ENCODE measurements at regions of chr2 and their contacts with region 1.

Region 1: DNA sequence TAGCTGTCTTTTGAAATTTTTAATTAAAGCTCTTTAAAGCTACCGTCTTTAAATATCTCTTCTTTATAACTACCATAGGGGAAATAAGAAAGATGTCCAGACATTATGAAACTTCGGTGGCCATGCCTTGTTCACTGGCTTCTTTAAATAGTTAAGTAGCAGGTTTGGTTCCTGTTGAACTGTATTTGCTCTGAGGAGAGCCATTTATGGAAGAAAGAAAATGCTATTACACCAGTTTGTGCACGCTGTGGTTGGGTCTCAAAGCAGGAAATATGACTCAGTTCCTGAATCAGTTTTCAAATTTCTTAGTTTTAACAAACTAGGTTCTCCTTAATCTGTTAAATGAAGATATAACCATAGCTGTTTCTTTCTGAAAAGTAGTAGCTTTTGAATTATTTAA is 12.2 kb downstream of the ARPC2 start:
- DNase-seq: peak in 7 of 10 donors; percentile 20 to 66 (median 57)
- ATAC-seq: peak; percentile 82 to 87
- H3K4me3 Mint-ChIP-seq: peak overlapping the region; percentile 28 to 85 (median 76)
- H3K27ac Mint-ChIP-seq: peak overlapping the region; percentile 20 to 97 (median 88)
- H3K4me1 Mint-ChIP-seq: peaks cover 36 to 86% (median 80%) of the 10 kb centered on the region in 4 donors
- H3K27me3 Mint-ChIP-seq: no peaks in the 10 kb centered on the region

Region 2: DNA sequence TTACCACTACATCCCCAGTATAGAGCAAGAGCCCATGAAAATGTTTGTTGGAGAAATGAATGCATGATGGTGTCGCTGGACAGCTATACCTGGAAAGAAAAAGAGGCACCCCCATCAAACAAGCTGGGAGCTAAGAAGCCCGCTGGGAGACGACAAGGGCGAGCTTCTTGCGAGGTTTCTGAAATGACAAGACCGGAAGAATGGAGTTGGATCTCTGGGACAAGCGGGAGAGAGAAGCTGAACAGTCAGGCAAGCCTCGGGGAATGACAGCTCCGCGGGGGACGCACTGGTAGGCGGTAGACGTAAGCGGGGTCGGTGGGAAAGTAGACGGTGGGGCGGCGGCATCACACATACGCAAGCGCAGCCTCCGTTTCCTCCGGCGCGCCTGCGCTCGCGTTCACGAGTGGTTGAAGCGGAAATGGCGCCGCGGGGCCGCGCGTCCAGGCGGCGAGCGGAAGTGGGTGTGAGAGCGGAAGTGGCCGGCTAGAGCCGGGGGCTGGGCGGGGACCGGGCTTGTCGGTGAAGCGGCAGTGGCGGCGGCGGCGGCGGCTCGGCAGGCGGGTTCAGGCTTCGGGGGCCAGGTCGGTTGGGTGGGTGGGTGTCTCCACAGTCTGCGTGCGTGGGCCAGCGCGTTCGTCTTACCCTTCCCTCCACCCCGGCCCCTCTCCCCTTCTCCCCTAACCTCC is 12.4 kb before region 1 on chr2 and contains the start of gene ARPC2:
- POLR2A ChIA-PET with region 1: interaction called, 21 read pairs
- DNase-seq: peak; percentile 90 to 97 (median 95)
- ATAC-seq: peak; percentile 81 to 83
- H3K4me3 Mint-ChIP-seq: peak within 1 kb of the TSS; percentile 90 to 99 (median 94)
- H3K27ac Mint-ChIP-seq: peak within 1 kb of the TSS; percentile 95 to 100 (median 97)
- H3K4me1 Mint-ChIP-seq: peaks cover 25 to 48% (median 43%) of the 10 kb centered on the region in 4 donors
- H3K27me3 Mint-ChIP-seq: no peaks in the 10 kb centered on the region
- polyA plus RNA-seq, gene ARPC2: 690 to 865 (median 728) TPM